Activated CD4-positive, alpha-beta T cell treated with anti-CD3 and anti-CD28 coated beads, Interleukin-2, amount 10 ng/mL, durations not matched to agents 24 days and 14 days (primary cell): ENCODE measurements at regions of chr19 and their contacts with region 1.

Region 1: DNA sequence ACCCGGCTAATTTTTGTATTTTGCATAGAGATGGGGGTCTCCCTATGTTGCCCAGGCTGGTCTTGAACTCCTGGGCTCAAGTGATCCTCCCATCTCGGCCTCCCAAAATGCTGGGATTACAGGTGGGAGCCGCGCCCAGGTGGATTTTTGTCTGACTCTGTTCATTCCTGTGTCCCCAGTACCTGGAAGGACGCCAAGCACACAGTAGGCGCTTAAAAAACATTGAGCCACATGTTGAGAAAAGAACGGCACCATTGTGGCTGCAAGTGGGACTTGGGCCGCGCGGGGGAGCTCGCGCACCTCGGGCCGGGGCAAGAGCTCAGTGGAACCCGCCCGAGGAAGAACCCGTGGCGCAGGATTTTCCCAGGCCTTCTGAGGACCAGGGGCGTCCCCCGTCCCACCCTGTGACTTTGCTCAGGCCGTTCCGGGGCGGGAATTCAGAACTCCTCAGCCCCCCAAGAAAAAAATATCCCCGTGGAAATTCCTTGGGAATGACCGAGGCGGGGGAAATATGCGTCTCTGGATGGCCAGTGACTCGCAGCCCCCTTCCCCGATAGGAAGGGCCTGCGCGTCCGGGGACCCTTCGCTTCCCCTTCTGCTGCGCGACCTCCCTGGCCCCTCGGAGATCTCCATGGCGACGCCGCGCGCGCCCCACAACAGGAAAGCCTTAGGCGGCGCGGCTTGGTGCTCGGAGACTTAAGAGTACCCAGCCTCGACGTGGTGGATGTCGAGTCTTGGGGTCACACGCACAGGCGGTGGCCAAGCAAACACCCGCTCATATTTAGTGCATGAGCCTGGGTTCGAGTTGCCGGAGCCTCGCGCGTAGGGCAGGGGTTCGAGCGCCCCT is 1.4 kb upstream of the ICAM1 start:
- DNase-seq: peak; percentile 97
- H3K4me3 Mint-ChIP-seq: peak overlapping the region; percentile 96
- H3K27ac Mint-ChIP-seq: peak overlapping the region; percentile 96
- H3K4me1 Mint-ChIP-seq: peaks cover 28% of the 10 kb centered on the region
- H3K27me3 Mint-ChIP-seq: no peaks in the 10 kb centered on the region

Region 2: DNA sequence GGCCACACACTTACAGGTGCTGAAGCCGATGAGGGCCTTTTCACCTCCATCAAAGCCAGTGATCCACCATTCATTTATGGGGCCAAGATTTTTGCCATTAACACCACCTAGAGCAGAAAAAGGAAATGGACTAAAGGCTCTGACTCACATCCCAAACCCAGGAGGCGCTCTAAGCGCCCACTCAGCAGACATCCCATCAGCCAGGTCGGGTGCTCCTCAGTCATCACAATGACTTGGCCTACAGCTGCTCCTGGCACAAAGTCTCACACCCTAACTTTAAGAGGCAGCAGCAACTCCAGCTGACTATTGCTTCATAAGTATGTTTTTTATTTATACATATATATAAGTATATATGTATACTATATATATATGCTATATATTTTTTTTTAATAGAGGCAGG is 113.7 kb before region 1 on chr19:
- intact Hi-C with region 1: no loop called
- DNase-seq: no peak
- H3K4me3 Mint-ChIP-seq: no peak overlapping the region
- H3K27ac Mint-ChIP-seq: no peak overlapping the region
- H3K4me1 Mint-ChIP-seq: peaks cover 2% of the 10 kb centered on the region
- H3K27me3 Mint-ChIP-seq: no peaks in the 10 kb centered on the region

Region 3: DNA sequence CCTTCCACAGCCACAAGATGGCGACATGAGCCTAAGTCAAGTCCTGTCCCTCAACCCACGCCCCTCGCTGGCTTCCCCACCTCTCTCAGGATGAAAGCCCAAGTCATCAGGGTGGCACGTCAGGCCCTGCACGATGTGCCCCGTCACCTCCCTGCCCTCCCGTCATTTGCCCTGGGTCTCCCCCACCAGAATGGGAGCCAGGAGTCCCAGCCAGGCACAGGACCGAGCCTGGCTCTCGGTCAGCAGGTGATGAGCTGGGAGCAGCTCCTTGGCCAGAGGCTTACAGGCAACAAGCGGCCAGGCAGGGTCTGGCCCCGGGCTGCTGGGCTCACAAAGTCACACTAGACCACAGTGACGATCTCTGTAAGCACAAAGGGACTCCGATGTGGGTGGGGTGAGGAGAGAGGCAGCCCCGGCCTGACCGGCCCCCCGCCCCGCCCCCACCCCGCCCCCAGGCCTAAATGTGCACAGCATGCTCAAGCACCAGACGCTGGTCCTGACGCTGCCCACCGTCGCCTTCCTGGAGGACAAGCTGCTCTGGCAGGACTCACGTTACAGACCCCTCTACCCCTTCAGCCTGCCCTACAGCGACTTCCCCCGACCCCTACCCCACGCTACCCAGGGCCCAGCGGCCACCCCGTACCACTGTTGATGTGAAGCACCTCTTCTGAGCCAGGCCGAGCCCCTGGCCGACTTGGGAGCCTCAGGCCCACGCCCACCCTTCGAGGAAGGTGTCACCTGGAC is 10.2 kb before region 1 on chr19:
- intact Hi-C with region 1: loop called (anchors 1 kb)
- DNase-seq: peak; percentile 97
- H3K4me3 Mint-ChIP-seq: peak overlapping the region; percentile 70
- H3K27ac Mint-ChIP-seq: peak overlapping the region; percentile 94
- H3K4me1 Mint-ChIP-seq: peaks cover 28% of the 10 kb centered on the region
- H3K27me3 Mint-ChIP-seq: no peaks in the 10 kb centered on the region

Region 4: GRCh38 chr19:10292206-10292788 is 22.7 kb after region 1 on chr19:
- intact Hi-C with region 1: loop called (anchors 1 kb)
- DNase-seq: peak; percentile 92
- H3K4me3 Mint-ChIP-seq: peak overlapping the region; percentile 88
- H3K27ac Mint-ChIP-seq: peak overlapping the region; percentile 43
- H3K4me1 Mint-ChIP-seq: peaks cover 59% of the 10 kb centered on the region
- H3K27me3 Mint-ChIP-seq: peaks cover 54% of the 10 kb centered on the region

Region 5: GRCh38 chr19:10309423-10309822 is 39.9 kb after region 1 on chr19 and contains the start of gene ZGLP1:
- intact Hi-C with region 1: no loop called
- DNase-seq: no peak
- H3K4me3 Mint-ChIP-seq: no peak within 1 kb of the TSS
- H3K27ac Mint-ChIP-seq: no peak within 1 kb of the TSS
- H3K4me1 Mint-ChIP-seq: peaks cover 8% of the 10 kb centered on the region
- H3K27me3 Mint-ChIP-seq: no peaks in the 10 kb centered on the region
- total RNA-seq, gene ZGLP1: 2.0 and 2.8 TPM in 2 replicates

Region 6: DNA sequence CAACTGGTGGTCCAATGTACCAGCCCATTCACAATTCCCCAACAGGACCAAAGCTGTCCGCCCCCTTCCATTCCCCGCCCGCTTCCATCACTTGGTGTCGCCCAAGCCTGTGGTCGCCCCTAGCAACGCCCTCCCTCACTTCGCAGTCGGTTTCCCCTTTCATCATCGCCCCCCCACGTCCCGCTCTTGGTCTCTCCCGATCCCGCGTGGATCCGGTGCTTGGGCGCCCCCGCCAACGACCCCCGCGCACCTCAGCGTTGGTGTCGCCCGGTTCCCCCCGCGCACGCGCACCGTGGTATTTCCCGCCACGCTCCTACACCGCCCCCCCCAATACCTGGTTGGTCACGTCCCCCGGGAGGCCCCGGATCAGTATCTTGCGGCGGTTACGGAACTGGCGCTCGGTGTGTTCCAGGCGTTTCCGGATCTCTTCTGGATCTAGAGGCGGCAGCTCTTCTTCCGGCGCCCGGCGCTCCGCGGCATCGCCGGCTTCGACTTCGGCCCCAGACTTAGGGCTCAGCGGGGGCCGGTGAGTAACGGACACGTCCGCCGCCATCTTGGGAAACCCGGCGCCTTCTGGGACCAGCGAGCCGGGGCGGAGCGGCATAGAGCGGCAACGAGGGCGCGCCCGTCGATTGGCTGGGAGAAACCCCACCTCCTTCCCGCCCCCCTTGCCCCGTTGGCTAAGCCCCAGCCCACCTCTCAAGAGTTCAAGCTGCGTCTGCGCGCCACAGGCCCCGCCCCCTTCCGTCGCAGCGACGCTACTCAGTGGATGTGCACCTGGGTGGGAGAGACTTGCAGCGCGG is 63.6 kb after region 1 on chr19 and contains the start of gene RAVER1:
- intact Hi-C with region 1: loop called (anchors 2 kb)
- DNase-seq: peak; percentile 99
- H3K4me3 Mint-ChIP-seq: peak within 1 kb of the TSS; percentile 96
- H3K27ac Mint-ChIP-seq: peak within 1 kb of the TSS; percentile 96
- H3K4me1 Mint-ChIP-seq: peaks cover 21% of the 10 kb centered on the region
- H3K27me3 Mint-ChIP-seq: no peaks in the 10 kb centered on the region
- total RNA-seq, gene RAVER1: 96.1 and 108 TPM in 2 replicates

Region 7: GRCh38 chr19:10363789-10364281 is 94.3 kb after region 1 on chr19:
- intact Hi-C with region 1: no loop called
- DNase-seq: no peak
- H3K4me3 Mint-ChIP-seq: no peak overlapping the region
- H3K27ac Mint-ChIP-seq: no peak overlapping the region
- H3K4me1 Mint-ChIP-seq: peaks cover 5% of the 10 kb centered on the region
- H3K27me3 Mint-ChIP-seq: no peaks in the 10 kb centered on the region

Region 8: DNA sequence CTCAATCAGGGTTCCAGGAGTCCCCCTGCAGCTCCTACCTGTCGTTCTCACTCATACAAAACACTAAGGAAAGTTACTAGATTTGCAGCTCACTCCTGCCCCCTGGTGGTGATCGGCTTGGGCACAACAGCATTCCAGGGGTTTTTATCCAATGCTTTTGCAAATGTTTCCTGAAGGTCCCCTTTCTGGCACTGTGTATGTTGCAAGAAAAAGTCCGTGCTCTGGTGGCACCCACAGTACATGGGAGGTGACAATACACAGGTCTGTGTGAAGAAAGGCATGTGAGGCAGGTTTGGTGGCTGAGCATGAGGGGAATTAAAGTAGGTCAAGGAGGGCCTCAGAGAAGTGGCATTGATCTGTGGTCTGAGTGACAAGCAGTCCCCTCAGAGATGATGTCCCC is 119.4 kb after region 1 on chr19:
- intact Hi-C with region 1: loop called (anchors 1 kb)
- DNase-seq: peak; percentile 93
- H3K4me3 Mint-ChIP-seq: no peak overlapping the region
- H3K27ac Mint-ChIP-seq: no peak overlapping the region
- H3K4me1 Mint-ChIP-seq: peaks cover 9% of the 10 kb centered on the region
- H3K27me3 Mint-ChIP-seq: no peaks in the 10 kb centered on the region